Naive thymus-derived CD4-positive, alpha-beta T cell (primary cell): ENCODE measurements at regions of chr3 and their contacts with region 1.

Region 1: GRCh38 chr3:156808025-156808424 is 18.1 kb upstream of the LEKR1 start:
- DNase-seq: no peak
- ATAC-seq: no peak
- H3K4me3 ChIP-seq: no peak overlapping the region
- H3K4me3 Mint-ChIP-seq: no peak overlapping the region
- H3K27ac ChIP-seq: no peak overlapping the region
- H3K27ac Mint-ChIP-seq: no peak overlapping the region
- H3K4me1 ChIP-seq: no peaks in the 10 kb centered on the region
- H3K4me1 Mint-ChIP-seq: peaks cover 0 to 35% (median 1%) of the 10 kb centered on the region in 7 donors
- H3K27me3 ChIP-seq: no peaks in the 10 kb centered on the region
- H3K27me3 Mint-ChIP-seq: no peaks in the 10 kb centered on the region

Region 2: DNA sequence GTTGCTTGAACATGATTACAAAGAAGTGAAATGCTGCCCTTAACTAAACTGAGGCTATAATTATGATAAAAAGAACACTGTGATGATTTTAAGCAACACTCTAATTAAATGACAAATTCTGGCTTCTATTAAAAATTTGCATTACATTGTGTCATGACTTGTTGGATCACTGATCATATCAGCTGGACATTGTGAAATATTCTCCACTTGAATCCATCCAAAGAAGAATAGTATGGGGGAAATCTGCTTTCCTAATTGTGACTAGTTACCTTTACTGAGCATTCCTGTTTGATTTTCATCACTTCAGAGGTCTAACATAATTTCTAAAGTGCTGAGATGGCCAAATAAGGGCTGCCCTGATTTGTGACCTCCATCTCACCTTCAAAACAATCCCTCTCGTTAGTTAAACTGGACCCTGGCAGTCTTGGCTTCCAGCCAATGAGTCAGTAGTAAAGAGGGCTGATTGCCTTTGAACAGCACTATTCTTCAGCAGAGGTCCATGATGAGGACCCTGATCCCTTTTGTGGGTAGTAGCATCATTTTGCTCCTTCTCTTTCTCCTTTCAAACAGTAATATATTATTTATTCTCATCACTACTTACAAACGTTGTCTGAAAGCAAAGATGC is 35.3 kb before region 1 on chr3:
- CTCF ChIA-PET with region 1: no interaction called
- POLR2A ChIA-PET with region 1: no interaction called
- intact Hi-C with region 1: loop called in 1 of 2 experiments (anchors 5 kb)
- DNase-seq: no peak
- ATAC-seq: no peak
- H3K4me3 ChIP-seq: no peak overlapping the region
- H3K4me3 Mint-ChIP-seq: no peak overlapping the region
- H3K27ac ChIP-seq: no peak overlapping the region
- H3K27ac Mint-ChIP-seq: no peak overlapping the region
- H3K4me1 ChIP-seq: no peaks in the 10 kb centered on the region
- H3K4me1 Mint-ChIP-seq: peaks cover 0 to 2% (median 0%) of the 10 kb centered on the region in 7 donors
- H3K27me3 ChIP-seq: no peaks in the 10 kb centered on the region
- H3K27me3 Mint-ChIP-seq: peaks cover 0 to 4% (median 0%) of the 10 kb centered on the region in 5 donors

Region 3: GRCh38 chr3:157650172-157650571 is 842.1 kb after region 1 on chr3:
- CTCF ChIA-PET with region 1: no interaction called
- POLR2A ChIA-PET with region 1: no interaction called
- intact Hi-C with region 1: no loop called
- DNase-seq: no peak
- ATAC-seq: no peak
- H3K4me3 ChIP-seq: no peak overlapping the region
- H3K4me3 Mint-ChIP-seq: no peak overlapping the region
- H3K27ac ChIP-seq: no peak overlapping the region
- H3K27ac Mint-ChIP-seq: no peak overlapping the region
- H3K4me1 ChIP-seq: no peaks in the 10 kb centered on the region
- H3K4me1 Mint-ChIP-seq: peaks cover 0 to 1% (median 0%) of the 10 kb centered on the region in 7 donors
- H3K27me3 ChIP-seq: no peaks in the 10 kb centered on the region
- H3K27me3 Mint-ChIP-seq: peaks cover 0 to 18% (median 6%) of the 10 kb centered on the region in 5 donors